BJ (cell line): ENCODE measurements at regions of chr11 and their contacts with region 1.

Region 1: GRCh38 chr11:125141686-125142535 is 22.6 kb upstream of the PKNOX2 start:
- DNase-seq: no peak
- H3K4me3 ChIP-seq: no peak overlapping the region
- H3K27me3 ChIP-seq: peaks cover 11% of the 10 kb centered on the region
- CTCF ChIP-seq: peak; percentile 97

Region 2: GRCh38 chr11:124953753-124954589 is 187.9 kb before region 1 on chr11 and contains the start of gene CCDC15:
- CTCF ChIA-PET with region 1: interaction called, 38 read pairs
- POLR2A ChIA-PET with region 1: no interaction called
- DNase-seq: peak; percentile 88
- H3K4me3 ChIP-seq: peak within 1 kb of the TSS; percentile 63
- H3K27me3 ChIP-seq: no peaks in the 10 kb centered on the region
- CTCF ChIP-seq: no peak
- polyA plus RNA-seq, gene CCDC15: 0.66 and 1.3 TPM in 2 replicates

Region 3: GRCh38 chr11:124970925-124971324 is 171.0 kb before region 1 on chr11:
- CTCF ChIA-PET with region 1: interaction called, 19 read pairs
- POLR2A ChIA-PET with region 1: no interaction called
- DNase-seq: no peak
- H3K4me3 ChIP-seq: no peak overlapping the region
- H3K27me3 ChIP-seq: no peaks in the 10 kb centered on the region
- CTCF ChIP-seq: no peak

Region 4: GRCh38 chr11:125111343-125112207 is 30.3 kb before region 1 on chr11 and contains the start of gene TMEM218:
- CTCF ChIA-PET with region 1: interaction called, 11 read pairs
- POLR2A ChIA-PET with region 1: no interaction called
- DNase-seq: peak; percentile 97
- H3K4me3 ChIP-seq: peak within 1 kb of the TSS; percentile 96
- H3K27me3 ChIP-seq: no peaks in the 10 kb centered on the region
- CTCF ChIP-seq: no peak
- polyA plus RNA-seq, gene TMEM218: 15.1 and 20.6 TPM in 2 replicates

Region 5: DNA sequence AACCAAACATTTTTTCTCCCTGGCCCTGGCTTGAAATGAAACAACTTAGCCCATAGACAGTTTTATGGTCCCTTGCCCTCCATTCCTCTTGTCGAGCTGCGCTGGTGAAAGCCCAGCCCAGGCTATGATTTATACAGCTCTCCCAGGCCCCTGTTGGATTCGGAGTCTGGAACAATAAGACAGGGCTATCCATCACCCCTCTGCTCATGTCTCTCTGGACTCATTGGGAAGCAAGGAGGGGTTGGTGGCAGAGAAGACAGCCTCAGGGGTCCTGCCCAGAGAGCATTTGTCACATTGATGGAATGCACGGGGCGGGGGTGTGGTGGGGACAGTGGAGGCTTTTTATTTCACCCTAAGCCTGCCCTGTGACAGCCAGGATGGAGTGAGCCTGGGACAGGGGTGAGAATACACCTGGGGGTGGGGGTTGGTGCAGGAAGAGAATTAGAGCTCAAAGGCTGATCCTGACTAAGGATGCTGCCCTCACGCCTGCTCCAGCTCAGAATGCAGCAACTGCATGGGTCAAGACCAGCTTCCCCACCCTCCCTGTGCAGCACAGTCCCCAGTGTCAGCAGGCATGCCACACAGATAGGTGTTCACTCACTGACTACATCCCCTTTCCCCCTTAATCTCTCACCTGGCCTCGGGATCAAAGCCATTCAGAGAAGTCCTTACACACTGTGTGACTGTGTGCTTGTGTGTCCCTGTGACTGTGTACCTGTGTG is 12.6 kb after region 1 on chr11:
- CTCF ChIA-PET with region 1: interaction called, 43 read pairs
- POLR2A ChIA-PET with region 1: interaction called, 4 read pairs
- DNase-seq: no peak
- H3K4me3 ChIP-seq: no peak overlapping the region
- H3K27me3 ChIP-seq: peaks cover 7% of the 10 kb centered on the region
- CTCF ChIP-seq: no peak

Region 6: GRCh38 chr11:125429166-125429707 is 287.3 kb after region 1 on chr11:
- CTCF ChIA-PET with region 1: interaction called, 19 read pairs
- POLR2A ChIA-PET with region 1: no interaction called
- DNase-seq: no peak
- H3K4me3 ChIP-seq: no peak overlapping the region
- H3K27me3 ChIP-seq: peaks cover 10% of the 10 kb centered on the region
- CTCF ChIP-seq: peak; percentile 83